ENCODE measurements at regions of chr10 and their contacts with region 1.

Region 1: DNA sequence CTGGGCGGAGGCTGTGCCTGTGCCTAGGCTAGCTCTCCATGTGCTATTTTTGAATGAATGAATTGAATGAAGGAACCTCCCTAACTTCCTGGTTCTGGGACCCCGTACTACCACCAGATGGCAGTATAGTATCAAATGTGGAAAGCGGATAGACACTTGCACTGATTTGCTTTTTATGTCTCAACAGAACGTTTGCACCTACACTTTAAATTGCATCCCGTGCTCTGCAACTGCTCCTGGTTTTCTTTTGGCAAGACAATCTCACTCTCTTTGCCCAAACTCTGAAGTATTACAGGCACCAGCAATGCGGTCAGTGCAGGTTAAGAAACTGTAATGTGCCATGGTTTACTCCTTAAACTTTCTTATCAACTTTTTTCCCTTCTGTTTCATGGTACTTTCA is 6.5 kb downstream of the FZD8 start:
- DNase-seq: peak; percentile 29 to 65 (median 49)
- H3K4me3 ChIP-seq: no peak overlapping the region
- H3K27ac ChIP-seq: no peak overlapping the region
- H3K4me1 ChIP-seq: peaks cover 3 to 4% of the 10 kb centered on the region in 2 donors
- H3K27me3 ChIP-seq: no peaks in the 10 kb centered on the region
- CTCF ChIP-seq: peak; percentile 82 to 94 (median 87)
- POLR2A ChIP-seq: no peak

Region 2: GRCh38 chr10:36779234-36779846 is 1143.8 kb after region 1 on chr10:
- intact Hi-C with region 1: loop called (anchors 5 kb)
- DNase-seq: peak; percentile 21 to 69 (median 31)
- H3K4me3 ChIP-seq: no peak overlapping the region
- H3K27ac ChIP-seq: no peak overlapping the region
- H3K4me1 ChIP-seq: no peaks in the 10 kb centered on the region
- H3K27me3 ChIP-seq: no peaks in the 10 kb centered on the region
- CTCF ChIP-seq: peak; percentile 48 to 87 (median 82)
- POLR2A ChIP-seq: no peak

Region 3: GRCh38 chr10:36888929-36889573 is 1253.5 kb after region 1 on chr10:
- intact Hi-C with region 1: loop called in 1 of 2 experiments (anchors 10 kb)
- DNase-seq: peak in 1 of 7 donors; percentile 77
- H3K4me3 ChIP-seq: no peak overlapping the region
- H3K27ac ChIP-seq: no peak overlapping the region
- H3K4me1 ChIP-seq: no peaks in the 10 kb centered on the region
- H3K27me3 ChIP-seq: no peaks in the 10 kb centered on the region
- CTCF ChIP-seq: no peak
- POLR2A ChIP-seq: no peak